Head of caudate nucleus (tissue), 42 donors: ENCODE measurements at regions of chr11 and their contacts with region 1.

Region 1: DNA sequence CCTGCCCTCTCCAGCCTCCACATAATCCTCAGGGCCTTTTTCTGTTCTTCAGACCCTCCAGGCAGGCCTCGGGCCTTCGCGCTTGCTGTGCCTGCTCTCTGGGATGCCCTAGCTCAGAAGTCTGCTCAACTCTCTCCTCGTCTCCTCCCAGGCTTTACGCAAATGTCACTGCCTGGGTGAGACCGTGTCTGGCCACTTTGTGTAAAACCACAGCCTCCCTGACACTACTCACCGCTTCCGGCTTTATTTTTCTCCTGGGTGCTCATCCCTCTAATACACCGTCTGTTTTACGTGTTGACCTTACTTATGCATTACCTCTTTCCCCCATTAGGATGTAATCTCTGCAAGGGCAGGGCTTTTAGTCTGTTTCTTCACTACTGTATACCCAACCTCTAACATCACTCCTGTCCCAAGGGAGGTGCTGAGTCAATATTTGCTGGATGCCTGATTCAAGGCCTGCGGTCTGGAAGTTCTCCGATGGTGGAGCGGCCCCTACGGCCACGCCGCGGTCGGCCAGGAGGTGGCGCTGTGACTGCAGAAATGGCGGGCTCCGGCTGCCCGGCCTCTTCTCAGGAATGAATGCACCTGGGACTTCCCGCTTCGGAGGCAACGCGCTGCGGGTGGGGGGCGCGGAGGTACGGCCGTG is 58.2 kb upstream of the THY1 start:
- DNase-seq: peak in 41 of 42 donors; percentile 70 to 96 (median 87)

Region 2: GRCh38 chr11:119533921-119534736 is 53.0 kb after region 1 on chr11:
- intact Hi-C with region 1: loop called (anchors 5 kb)
- DNase-seq: peak; percentile 50 to 95 (median 87)

Region 3: GRCh38 chr11:119666463-119667131 is 185.5 kb after region 1 on chr11:
- intact Hi-C with region 1: loop called (anchors 5 kb)
- DNase-seq: peak; percentile 54 to 95 (median 88)

Region 4: DNA sequence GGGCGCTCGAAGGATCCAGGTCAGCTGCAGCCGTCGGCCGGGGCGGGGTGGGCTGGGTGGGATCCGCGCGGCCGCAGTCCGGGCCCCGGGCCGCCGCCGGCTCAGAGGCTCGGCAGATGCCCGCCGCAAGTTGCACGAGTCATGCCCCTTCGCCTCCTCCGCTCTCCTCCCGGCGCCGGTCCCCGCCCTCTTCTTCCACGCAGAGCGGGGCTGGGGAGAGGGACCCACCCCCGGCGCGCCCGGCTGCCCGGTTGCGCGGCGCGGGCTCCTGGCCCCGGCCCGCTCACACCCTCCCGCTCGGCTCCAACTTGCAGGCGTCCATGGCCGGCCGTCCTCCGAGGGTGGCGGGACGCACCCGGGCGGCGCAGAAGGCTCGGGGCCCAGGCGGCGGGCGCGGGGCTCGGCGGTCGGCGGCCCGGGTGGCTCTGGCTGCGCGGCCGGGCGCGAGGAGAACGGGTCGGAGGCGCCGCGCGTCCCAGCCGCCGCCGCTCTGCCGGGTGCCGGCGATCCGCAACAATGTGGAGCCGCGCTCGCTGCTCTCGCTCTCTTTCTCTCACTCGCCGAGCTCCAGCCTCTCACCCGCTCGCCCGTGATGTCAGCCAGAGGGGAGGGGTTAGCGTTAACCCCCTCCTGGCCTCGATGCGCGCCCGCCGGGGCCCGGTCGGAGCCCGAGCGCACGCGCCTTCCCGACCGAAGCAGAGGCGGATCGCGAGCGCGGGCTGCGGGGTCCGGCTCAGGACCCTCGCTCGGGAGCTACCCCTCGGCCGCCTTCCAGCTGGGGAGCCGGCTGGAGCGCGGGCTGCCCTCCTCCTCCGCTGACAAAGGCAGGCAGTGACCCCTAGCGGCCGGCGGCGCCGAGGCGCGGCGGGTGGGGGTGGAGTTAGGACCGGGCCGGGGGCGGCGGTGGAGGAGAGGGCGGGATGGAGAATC is 247.8 kb after region 1 on chr11 and contains the start of gene NECTIN1:
- intact Hi-C with region 1: loop called (anchors 5 kb)
- DNase-seq: peak; percentile 76 to 96 (median 92)

Region 5: DNA sequence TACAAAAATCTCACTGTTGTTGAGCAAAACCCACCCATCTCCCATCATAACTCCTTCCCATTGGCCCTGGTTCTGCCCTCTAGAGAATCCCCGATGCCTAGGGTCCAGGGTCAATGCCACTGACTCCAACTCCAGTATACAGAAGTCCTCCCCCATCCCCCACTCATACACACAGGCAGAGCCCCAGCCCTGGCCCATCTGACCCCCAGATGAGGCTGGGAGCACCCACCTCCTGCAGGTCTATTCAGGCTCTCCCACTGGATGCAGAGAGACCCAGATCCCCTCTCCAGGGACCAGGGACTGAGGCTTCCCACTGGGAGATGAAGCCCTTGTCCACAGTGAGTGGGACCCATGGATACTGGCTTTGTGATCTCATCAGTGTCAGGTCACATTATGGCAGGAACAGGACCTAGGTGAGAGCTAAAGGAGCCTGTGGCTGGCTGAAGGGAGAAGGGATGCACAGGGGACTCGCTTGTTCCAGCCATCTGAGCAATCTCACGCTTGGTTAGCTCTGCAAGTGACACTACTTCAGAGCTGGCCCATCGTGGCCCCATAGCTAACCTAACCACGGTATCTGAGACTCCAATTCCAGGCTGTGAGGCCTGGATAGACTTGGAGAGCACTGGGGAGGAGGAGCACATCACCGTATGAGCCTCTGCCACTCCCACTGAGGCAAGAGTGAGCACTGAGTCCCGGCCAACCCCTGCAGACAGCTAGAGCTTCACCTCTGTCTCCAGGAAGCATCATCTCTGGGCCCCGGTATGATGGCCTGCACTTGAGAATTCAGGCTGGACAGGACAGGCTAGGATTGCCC is 621.1 kb after region 1 on chr11:
- intact Hi-C with region 1: loop called (anchors 5 kb)
- DNase-seq: no peak